Psoas muscle (tissue), 8 donors: ENCODE measurements at regions of chr7 and their contacts with region 1.

Region 1: GRCh38 chr7:97145068-97145467 is 27.6 kb downstream of the SDHAF3 start:
- DNase-seq: no peak
- ATAC-seq: no peak
- H3K4me3 ChIP-seq: no peak overlapping the region
- H3K27ac ChIP-seq: no peak overlapping the region
- H3K4me1 ChIP-seq: no peaks in the 10 kb centered on the region
- H3K27me3 ChIP-seq: no peaks in the 10 kb centered on the region
- CTCF ChIP-seq: peak; percentile 42

Region 2: DNA sequence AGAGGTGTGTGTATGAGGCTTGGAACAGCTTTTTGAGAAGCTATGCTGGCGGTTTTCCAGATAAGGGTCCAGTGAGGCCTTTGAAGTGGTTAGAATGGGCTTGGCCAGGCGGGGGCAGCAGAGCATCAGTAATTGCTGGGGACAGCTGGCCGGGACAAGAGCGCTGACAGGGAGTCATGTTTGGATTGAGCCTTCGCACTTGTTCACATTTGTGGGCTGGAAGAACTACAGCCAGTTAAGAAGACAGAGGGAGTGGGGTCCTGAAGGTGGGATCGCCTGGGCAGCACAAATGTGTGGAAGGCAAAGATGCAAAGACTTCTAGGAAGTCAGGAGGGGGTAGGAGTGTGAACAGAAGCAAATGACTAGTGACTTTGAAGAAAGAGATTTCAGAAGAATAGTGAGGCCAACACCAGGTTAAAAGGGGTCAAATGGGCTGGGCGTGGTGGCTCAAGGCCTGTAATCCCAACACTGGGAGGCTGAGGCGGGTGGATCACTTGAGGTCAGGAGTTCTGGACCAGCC is 40.3 kb before region 1 on chr7:
- intact Hi-C with region 1: no loop called
- DNase-seq: peak; percentile 84 to 92
- ATAC-seq: peak; percentile 89 to 98 (median 94)
- H3K4me3 ChIP-seq: no peak overlapping the region
- H3K27ac ChIP-seq: no peak overlapping the region
- H3K4me1 ChIP-seq: no peaks in the 10 kb centered on the region
- H3K27me3 ChIP-seq: no peaks in the 10 kb centered on the region
- CTCF ChIP-seq: peak; percentile 81

Region 3: GRCh38 chr7:97179454-97180104 is 34.5 kb after region 1 on chr7:
- intact Hi-C with region 1: loop called in 1 of 2 experiments (anchors 5 kb)
- DNase-seq: no peak
- ATAC-seq: peak in 2 of 4 donors; percentile 72 to 73
- H3K4me3 ChIP-seq: no peak overlapping the region
- H3K27ac ChIP-seq: no peak overlapping the region
- H3K4me1 ChIP-seq: no peaks in the 10 kb centered on the region
- H3K27me3 ChIP-seq: no peaks in the 10 kb centered on the region
- CTCF ChIP-seq: peak; percentile 73